B cell (primary cell): ENCODE measurements at regions of chr13 and their contacts with region 1.

Region 1: GRCh38 chr13:49606747-49607648 is 21.3 kb upstream of the ARL11 start:
- DNase-seq: peak; percentile 85
- ATAC-seq: peak; percentile 95
- H3K4me3 ChIP-seq: peak overlapping the region; percentile 7 to 45 (median 36)
- H3K4me3 Mint-ChIP-seq: peak overlapping the region; percentile 90
- H3K27ac ChIP-seq: no peak overlapping the region
- H3K27ac Mint-ChIP-seq: peak overlapping the region; percentile 92
- H3K4me1 ChIP-seq: peaks cover 12 to 19% of the 10 kb centered on the region in 2 donors
- H3K4me1 Mint-ChIP-seq: peaks cover 25% of the 10 kb centered on the region
- H3K27me3 ChIP-seq: no peaks in the 10 kb centered on the region
- H3K27me3 Mint-ChIP-seq: no peaks in the 10 kb centered on the region
- CTCF ChIP-seq: peak; percentile 84

Region 2: GRCh38 chr13:48902368-48902767 is 704.6 kb before region 1 on chr13:
- CTCF ChIA-PET with region 1: no interaction called
- POLR2A ChIA-PET with region 1: no interaction called
- intact Hi-C with region 1: no loop called
- DNase-seq: no peak
- ATAC-seq: no peak
- H3K4me3 ChIP-seq: no peak overlapping the region
- H3K4me3 Mint-ChIP-seq: no peak overlapping the region
- H3K27ac ChIP-seq: no peak overlapping the region
- H3K27ac Mint-ChIP-seq: no peak overlapping the region
- H3K4me1 ChIP-seq: no peaks in the 10 kb centered on the region
- H3K4me1 Mint-ChIP-seq: no peaks in the 10 kb centered on the region
- H3K27me3 ChIP-seq: peaks cover 0 to 5% (median 2%) of the 10 kb centered on the region in 4 experiments
- H3K27me3 Mint-ChIP-seq: peaks cover 37% of the 10 kb centered on the region
- CTCF ChIP-seq: no peak

Region 3: GRCh38 chr13:49278211-49278610 is 328.8 kb before region 1 on chr13:
- CTCF ChIA-PET with region 1: interaction called, 20 read pairs
- POLR2A ChIA-PET with region 1: no interaction called
- intact Hi-C with region 1: no loop called
- DNase-seq: no peak
- ATAC-seq: no peak
- H3K4me3 ChIP-seq: no peak overlapping the region
- H3K4me3 Mint-ChIP-seq: no peak overlapping the region
- H3K27ac ChIP-seq: no peak overlapping the region
- H3K27ac Mint-ChIP-seq: no peak overlapping the region
- H3K4me1 ChIP-seq: no peaks in the 10 kb centered on the region
- H3K4me1 Mint-ChIP-seq: no peaks in the 10 kb centered on the region
- H3K27me3 ChIP-seq: no peaks in the 10 kb centered on the region
- H3K27me3 Mint-ChIP-seq: no peaks in the 10 kb centered on the region
- CTCF ChIP-seq: no peak

Region 4: GRCh38 chr13:49300739-49301589 is 306.0 kb before region 1 on chr13:
- CTCF ChIA-PET with region 1: interaction called, 73 read pairs
- POLR2A ChIA-PET with region 1: no interaction called
- intact Hi-C with region 1: loop called (anchors 1 kb)
- DNase-seq: peak; percentile 84
- ATAC-seq: peak; percentile 96
- H3K4me3 ChIP-seq: peak overlapping the region in 4 of 5 experiments; percentile 29 to 57 (median 46)
- H3K4me3 Mint-ChIP-seq: peak overlapping the region; percentile 81
- H3K27ac ChIP-seq: no peak overlapping the region
- H3K27ac Mint-ChIP-seq: peak overlapping the region; percentile 66
- H3K4me1 ChIP-seq: peaks cover 4 to 20% of the 10 kb centered on the region in 2 donors
- H3K4me1 Mint-ChIP-seq: peaks cover 30% of the 10 kb centered on the region
- H3K27me3 ChIP-seq: no peaks in the 10 kb centered on the region
- H3K27me3 Mint-ChIP-seq: no peaks in the 10 kb centered on the region
- CTCF ChIP-seq: peak; percentile 91

Region 5: DNA sequence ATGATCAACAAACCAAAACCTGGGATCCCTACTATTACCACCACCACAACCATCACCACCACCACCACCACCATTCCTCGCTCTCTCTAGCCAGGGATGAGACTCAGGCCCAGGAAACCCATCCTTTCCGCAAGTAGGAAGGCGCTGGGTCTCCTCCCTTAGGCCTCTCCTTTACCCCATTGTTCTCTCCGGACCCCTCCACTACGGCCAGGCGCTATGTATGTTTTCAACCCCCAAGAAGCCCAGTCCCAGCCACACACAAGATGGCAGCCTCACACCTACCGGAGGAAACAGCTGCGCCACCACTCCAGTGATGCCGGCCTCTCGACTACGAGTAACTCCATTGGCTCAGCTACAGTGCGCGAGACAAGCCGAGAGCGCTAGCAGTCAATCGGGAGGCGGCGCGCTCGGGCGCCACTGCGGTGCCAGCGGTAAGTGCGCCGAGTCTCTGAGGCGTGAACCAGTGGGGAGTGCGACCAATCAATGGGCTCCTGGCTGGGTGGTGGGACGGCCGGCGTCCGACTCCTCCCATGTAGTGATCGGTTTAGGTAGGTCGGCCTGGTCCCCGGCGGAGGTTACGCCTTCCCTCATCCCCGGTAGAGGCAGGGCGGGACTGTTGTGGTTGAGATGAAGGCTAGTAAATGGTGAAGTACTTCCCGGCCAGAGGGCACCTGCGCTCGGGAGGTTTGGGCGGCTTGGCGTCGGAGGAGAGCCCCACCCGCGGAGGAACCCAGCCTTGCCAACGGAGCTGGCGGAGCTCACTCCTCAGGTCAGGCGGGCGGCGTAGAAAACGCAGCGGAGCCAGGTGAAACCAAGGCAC is 163.1 kb before region 1 on chr13 and contains the starts of genes CAB39L and SETDB2:
- CTCF ChIA-PET with region 1: interaction called, 14 read pairs
- POLR2A ChIA-PET with region 1: interaction called, 5 read pairs
- intact Hi-C with region 1: loop called (anchors 2 kb)
- DNase-seq: peak; percentile 100
- ATAC-seq: peak; percentile 89
- H3K4me3 ChIP-seq: peak within 1 kb of the TSS; percentile 63 to 98 (median 81)
- H3K4me3 Mint-ChIP-seq: peak within 1 kb of the TSS; percentile 96
- H3K27ac ChIP-seq: peak within 1 kb of the TSS; percentile 97
- H3K27ac Mint-ChIP-seq: peak within 1 kb of the TSS; percentile 99
- H3K4me1 ChIP-seq: peaks cover 33 to 51% of the 10 kb centered on the region in 2 donors
- H3K4me1 Mint-ChIP-seq: peaks cover 71% of the 10 kb centered on the region
- H3K27me3 ChIP-seq: no peaks in the 10 kb centered on the region
- H3K27me3 Mint-ChIP-seq: no peaks in the 10 kb centered on the region
- CTCF ChIP-seq: peak; percentile 34
- total RNA-seq, gene CAB39L: 8.9 and 9.6 TPM in 2 replicates
- total RNA-seq, gene SETDB2: 38.2 and 40.1 TPM in 2 replicates

Region 6: GRCh38 chr13:49585220-49586157 is 21.5 kb before region 1 on chr13 and contains the start of gene RCBTB1:
- CTCF ChIA-PET with region 1: interaction called, 10 read pairs
- POLR2A ChIA-PET with region 1: no interaction called
- intact Hi-C with region 1: loop called (anchors 1 kb)
- DNase-seq: peak; percentile 89
- ATAC-seq: peak; percentile 88
- H3K4me3 ChIP-seq: peak within 1 kb of the TSS; percentile 85 to 91 (median 87)
- H3K4me3 Mint-ChIP-seq: peak within 1 kb of the TSS; percentile 96
- H3K27ac ChIP-seq: peak within 1 kb of the TSS; percentile 88 to 90
- H3K27ac Mint-ChIP-seq: peak within 1 kb of the TSS; percentile 92
- H3K4me1 ChIP-seq: peaks cover 17 to 23% of the 10 kb centered on the region in 2 donors
- H3K4me1 Mint-ChIP-seq: peaks cover 29% of the 10 kb centered on the region
- H3K27me3 ChIP-seq: no peaks in the 10 kb centered on the region
- H3K27me3 Mint-ChIP-seq: no peaks in the 10 kb centered on the region
- CTCF ChIP-seq: no peak
- total RNA-seq, gene RCBTB1: 35.2 and 42.1 TPM in 2 replicates

Region 7: GRCh38 chr13:50715402-50716146 is 1108.6 kb after region 1 on chr13:
- CTCF ChIA-PET with region 1: no interaction called
- POLR2A ChIA-PET with region 1: no interaction called
- intact Hi-C with region 1: no loop called
- DNase-seq: no peak
- ATAC-seq: no peak
- H3K4me3 ChIP-seq: no peak overlapping the region
- H3K4me3 Mint-ChIP-seq: no peak overlapping the region
- H3K27ac ChIP-seq: no peak overlapping the region
- H3K27ac Mint-ChIP-seq: no peak overlapping the region
- H3K4me1 ChIP-seq: peaks cover 23 to 33% of the 10 kb centered on the region in 2 donors
- H3K4me1 Mint-ChIP-seq: peaks cover 36% of the 10 kb centered on the region
- H3K27me3 ChIP-seq: no peaks in the 10 kb centered on the region
- H3K27me3 Mint-ChIP-seq: no peaks in the 10 kb centered on the region
- CTCF ChIP-seq: no peak